ENCODE measurements at regions of chr18 and their contacts with region 1.

Region 1: DNA sequence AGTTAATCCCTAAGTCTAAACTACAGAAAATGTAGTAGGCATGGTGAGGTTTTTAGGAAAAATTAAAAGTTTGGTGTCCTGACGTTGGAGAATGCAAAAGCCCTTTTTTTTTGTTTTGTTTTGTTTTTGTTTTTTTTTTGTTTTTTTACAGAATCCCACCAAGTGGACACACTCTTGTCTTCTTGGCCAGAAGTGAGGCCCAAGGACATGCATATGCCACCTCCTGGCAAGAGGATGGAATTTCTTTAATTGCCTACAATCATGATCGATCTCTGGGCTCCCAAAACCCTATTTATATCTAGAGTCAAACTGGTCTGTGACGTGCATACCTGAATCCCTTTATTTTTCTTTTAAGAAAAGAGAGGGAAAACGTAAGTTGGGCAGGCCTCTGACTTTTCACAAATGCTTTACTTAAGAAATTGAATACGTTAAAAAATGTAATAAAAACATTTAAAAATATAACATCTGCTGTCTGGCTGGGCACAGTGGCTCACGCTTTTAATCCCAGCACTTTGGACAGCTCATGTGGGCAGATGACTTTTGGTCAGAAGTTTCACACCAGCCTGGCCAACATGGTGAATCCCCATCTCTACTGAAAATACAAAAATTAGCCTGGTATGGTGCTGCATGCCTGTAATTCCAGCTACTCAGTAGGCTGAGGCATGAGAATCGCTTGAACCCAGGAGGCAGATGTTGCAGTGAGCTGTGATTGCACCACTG is 502.7 kb downstream of the CBLN2 start:
- DNase-seq: no peak
- H3K4me3 Mint-ChIP-seq: no peak overlapping the region
- H3K27ac Mint-ChIP-seq: no peak overlapping the region
- H3K4me1 Mint-ChIP-seq: no peaks in the 10 kb centered on the region
- H3K27me3 Mint-ChIP-seq: no peaks in the 10 kb centered on the region

Region 2: DNA sequence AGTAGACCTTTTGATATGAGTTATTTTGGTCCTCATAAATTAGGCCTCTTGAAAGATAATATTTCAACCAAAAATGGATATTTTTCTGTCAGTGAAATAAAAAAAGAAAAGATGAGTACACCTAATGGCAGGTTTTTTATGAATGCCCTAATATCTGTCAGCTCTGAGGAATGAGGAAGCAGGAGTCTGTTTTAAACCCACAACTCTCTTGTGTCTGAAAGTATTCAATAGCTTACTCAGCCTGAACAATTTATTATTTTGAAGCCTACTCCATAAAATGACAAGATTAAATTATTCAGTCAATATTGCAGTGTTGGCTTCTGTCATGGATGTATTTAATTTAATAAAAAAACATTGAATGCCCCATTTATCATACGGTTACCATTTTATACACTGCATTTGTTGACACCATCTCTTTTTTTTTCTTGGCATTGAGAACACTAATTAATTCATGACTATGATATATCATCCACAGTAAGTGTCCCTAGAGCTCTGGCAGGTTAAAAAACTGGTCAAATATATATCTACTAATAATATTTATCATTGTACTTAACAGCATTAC is 45.5 kb before region 1 on chr18:
- intact Hi-C with region 1: loop called (anchors 5 kb)
- DNase-seq: no peak
- H3K4me3 Mint-ChIP-seq: no peak overlapping the region
- H3K27ac Mint-ChIP-seq: no peak overlapping the region
- H3K4me1 Mint-ChIP-seq: no peaks in the 10 kb centered on the region
- H3K27me3 Mint-ChIP-seq: no peaks in the 10 kb centered on the region

Region 3: DNA sequence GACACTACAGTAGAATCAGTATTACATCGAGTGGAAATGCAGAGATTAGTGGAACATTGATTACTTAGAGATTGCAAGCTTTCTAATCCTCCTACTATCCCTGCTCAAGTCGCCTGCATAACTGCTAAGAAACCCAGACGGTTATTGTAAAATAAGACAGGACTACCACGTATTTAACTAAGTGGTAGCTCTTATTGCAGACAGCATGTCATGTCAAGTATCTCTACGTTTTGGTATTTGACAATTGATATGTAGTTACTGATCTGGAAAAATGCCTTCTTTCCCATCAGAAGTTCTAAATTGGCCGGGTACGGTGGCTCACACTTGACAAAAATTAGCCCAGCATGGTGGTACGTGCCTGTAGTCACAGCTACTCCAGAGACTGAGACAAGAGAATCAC is 98.5 kb after region 1 on chr18:
- intact Hi-C with region 1: no loop called
- DNase-seq: no peak
- H3K4me3 Mint-ChIP-seq: no peak overlapping the region
- H3K27ac Mint-ChIP-seq: no peak overlapping the region
- H3K4me1 Mint-ChIP-seq: no peaks in the 10 kb centered on the region
- H3K27me3 Mint-ChIP-seq: no peaks in the 10 kb centered on the region